ENCODE measurements at regions of chr2 and their contacts with region 1.

Region 1: GRCh38 chr2:42944779-42945415 is 152.5 kb upstream of the HAAO start:
- DNase-seq: no peak
- H3K27ac ChIP-seq: peak overlapping the region; percentile 26; the same call in 1 of the 2 replicates
- CTCF ChIP-seq: no peak

Region 2: GRCh38 chr2:42828487-42829425 is 116.1 kb before region 1 on chr2:
- CTCF ChIA-PET with region 1: interaction called, 15 read pairs
- POLR2A ChIA-PET with region 1: no interaction called
- DNase-seq: peak; percentile 88
- H3K27ac ChIP-seq: peak overlapping the region; percentile 72
- CTCF ChIP-seq: peak; percentile 90

Region 3: DNA sequence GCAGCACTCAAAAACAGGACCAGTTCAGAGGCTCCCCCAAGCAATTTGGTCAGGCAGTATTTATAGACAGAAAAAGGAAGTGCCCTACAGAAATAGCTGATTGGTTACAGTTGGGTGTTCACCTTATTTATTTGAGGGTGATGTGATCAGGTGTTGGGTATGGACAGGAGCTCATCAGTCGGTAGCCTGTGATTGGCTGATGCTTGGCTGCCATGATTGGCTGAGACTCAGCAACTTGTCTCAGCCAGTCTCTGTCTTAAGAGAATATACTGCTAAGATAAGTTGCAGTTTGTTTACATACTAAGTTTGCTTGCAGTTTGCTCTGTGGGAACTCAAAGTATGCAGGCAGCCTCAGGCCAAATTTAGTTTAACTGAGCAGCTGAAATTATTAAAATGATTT is 903.3 kb after region 1 on chr2:
- CTCF ChIA-PET with region 1: no interaction called
- POLR2A ChIA-PET with region 1: no interaction called
- DNase-seq: peak; percentile 26
- H3K27ac ChIP-seq: no peak overlapping the region
- CTCF ChIP-seq: no peak